ENCODE measurements at regions of chr17 and their contacts with region 1.

Region 1: DNA sequence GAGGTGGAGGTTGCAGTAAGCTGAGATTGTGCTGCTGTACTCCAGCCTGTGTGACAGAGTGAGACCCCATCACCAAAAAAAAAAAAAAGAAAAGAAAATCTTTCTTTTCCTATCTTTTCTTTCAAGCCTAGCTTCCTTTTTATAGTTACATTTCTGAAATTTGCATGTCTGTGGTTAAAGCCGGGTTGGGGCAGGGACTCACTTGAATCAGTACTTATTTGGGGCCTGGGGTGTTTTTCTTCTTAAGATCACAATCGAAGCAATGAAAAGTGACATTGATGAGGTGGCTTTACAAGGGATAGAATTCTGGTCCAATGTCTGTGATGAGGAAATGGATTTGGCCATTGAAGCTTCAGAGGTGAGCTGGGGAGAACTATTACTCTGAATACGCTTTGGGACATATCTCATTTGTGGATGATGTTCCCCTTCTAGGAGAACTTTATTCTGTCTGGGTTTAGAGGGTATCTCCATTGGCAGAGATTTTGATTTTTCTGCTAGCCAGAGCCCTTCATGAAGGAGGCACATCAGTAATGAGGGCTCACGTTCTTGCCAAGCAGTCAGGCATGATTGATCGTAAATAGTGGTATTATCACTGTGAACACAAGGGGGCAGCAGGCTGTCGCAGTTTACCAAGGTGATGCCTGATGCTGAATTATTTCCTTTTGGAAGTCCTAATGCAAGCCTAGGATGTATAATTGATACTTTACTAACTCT is 14.3 kb downstream of the KPNB1 start:
- DNase-seq: peak; percentile 71
- H3K4me3 Mint-ChIP-seq: no peak overlapping the region
- H3K27ac Mint-ChIP-seq: peak overlapping the region; percentile 80
- H3K4me1 Mint-ChIP-seq: peaks cover 31% of the 10 kb centered on the region
- H3K27me3 Mint-ChIP-seq: no peaks in the 10 kb centered on the region

Region 2: DNA sequence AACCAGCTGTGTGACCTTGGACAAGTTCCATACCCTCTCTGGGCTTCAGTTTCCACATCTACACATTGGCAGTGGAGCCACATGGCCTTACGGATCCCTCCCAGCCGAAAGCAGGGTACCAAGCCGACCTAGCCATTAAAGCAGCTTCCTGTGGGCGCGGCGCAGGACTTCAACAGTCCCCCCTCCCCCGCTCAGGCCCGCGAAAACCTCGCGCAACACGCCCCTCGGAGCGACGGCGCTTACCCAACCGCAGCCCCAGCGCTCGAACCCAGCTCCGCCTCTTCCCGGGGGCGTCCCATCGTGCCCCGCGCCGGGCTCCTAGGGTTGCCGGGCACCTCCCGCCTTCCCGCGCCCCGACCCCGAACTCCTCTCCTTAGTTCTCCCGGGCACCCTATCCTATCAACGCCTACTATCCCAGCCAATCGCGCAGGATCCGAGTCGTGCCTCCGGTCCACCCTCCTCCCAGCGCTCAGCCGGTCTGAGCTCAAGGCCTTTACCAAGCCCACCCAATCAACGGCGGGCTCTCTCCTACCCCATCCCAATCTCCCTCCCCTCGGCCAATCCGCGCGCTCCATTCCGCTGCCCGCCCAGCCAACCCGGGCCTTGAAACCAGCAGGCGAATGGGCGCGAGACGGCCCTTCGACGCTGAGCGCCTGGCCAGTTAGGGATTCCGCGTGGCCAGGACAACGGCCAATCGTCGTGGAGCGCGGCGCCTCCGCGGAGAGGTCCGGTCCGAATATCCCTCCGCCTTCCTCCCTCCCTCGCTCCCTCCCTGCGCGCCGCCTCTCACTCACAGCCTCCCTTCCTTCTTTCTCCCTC is 14.7 kb before region 1 on chr17 and contains the start of gene KPNB1:
- CTCF ChIA-PET with region 1: interaction called, 38 read pairs
- POLR2A ChIA-PET with region 1: interaction called, 31 read pairs
- intact Hi-C with region 1: loop called (anchors 1 kb)
- DNase-seq: peak; percentile 100
- H3K4me3 Mint-ChIP-seq: peak within 1 kb of the TSS; percentile 92
- H3K27ac Mint-ChIP-seq: peak within 1 kb of the TSS; percentile 98
- H3K4me1 Mint-ChIP-seq: peaks cover 44% of the 10 kb centered on the region
- H3K27me3 Mint-ChIP-seq: no peaks in the 10 kb centered on the region
- total RNA-seq, gene KPNB1: 475 to 488 TPM

Region 3: GRCh38 chr17:47675380-47676198 is 11.5 kb after region 1 on chr17:
- CTCF ChIA-PET with region 1: interaction called, 47 read pairs
- POLR2A ChIA-PET with region 1: interaction called, 7 read pairs
- intact Hi-C with region 1: no loop called
- DNase-seq: no peak
- H3K4me3 Mint-ChIP-seq: no peak overlapping the region
- H3K27ac Mint-ChIP-seq: peak overlapping the region; percentile 72
- H3K4me1 Mint-ChIP-seq: peaks cover 27% of the 10 kb centered on the region
- H3K27me3 Mint-ChIP-seq: no peaks in the 10 kb centered on the region

Region 4: GRCh38 chr17:47708863-47709541 is 44.9 kb after region 1 on chr17:
- CTCF ChIA-PET with region 1: no interaction called
- POLR2A ChIA-PET with region 1: no interaction called
- intact Hi-C with region 1: no loop called
- DNase-seq: no peak
- H3K4me3 Mint-ChIP-seq: no peak overlapping the region
- H3K27ac Mint-ChIP-seq: no peak overlapping the region
- H3K4me1 Mint-ChIP-seq: peaks cover 62% of the 10 kb centered on the region
- H3K27me3 Mint-ChIP-seq: no peaks in the 10 kb centered on the region

Region 5: DNA sequence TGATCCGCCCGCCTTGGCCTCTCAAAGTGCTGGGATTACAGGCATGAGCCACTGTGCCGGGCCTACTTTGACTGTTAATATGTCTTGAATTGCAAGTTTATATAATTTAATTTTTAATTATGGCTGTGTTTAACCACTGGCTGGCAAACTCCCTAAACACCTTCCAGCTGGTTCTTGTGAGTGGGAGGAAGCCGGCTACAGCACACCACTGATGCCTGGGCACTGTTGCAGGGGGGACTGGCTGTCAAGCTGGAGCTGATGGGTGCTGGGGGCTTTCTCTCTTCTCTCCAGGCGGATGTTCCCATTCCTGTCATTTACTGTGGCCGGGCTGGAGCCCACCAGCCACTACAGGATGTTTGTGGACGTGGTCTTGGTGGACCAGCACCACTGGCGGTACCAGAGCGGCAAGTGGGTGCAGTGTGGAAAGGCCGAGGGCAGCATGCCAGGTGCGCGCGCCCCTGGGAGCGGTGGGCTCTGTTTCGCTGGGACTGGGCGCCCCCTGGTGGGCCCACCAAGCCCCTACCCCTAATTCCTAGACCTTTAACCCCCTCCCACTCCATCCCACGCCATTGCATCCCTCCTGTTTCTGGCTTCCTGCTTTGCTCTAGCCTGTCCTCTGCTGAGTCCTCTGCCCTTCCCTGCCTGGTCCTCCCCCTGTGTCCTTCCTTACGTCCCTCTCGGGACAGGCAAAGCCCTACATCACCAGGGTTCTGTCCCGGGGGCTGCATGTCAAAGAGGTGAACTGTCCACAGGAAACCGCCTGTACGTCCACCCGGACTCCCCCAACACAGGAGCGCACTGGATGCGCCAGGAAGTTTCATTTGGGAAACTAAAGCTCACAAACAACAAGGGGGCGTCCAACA is 78.5 kb after region 1 on chr17:
- CTCF ChIA-PET with region 1: interaction called, 5 read pairs
- POLR2A ChIA-PET with region 1: no interaction called
- intact Hi-C with region 1: loop called (anchors 5 kb)
- DNase-seq: peak; percentile 48
- H3K4me3 Mint-ChIP-seq: no peak overlapping the region
- H3K27ac Mint-ChIP-seq: peak overlapping the region; percentile 75
- H3K4me1 Mint-ChIP-seq: peaks cover 42% of the 10 kb centered on the region
- H3K27me3 Mint-ChIP-seq: no peaks in the 10 kb centered on the region

Region 6: GRCh38 chr17:47789611-47790561 is 125.8 kb after region 1 on chr17:
- CTCF ChIA-PET with region 1: interaction called, 27 read pairs
- POLR2A ChIA-PET with region 1: no interaction called
- intact Hi-C with region 1: loop called (anchors 5 kb)
- DNase-seq: peak; percentile 78
- H3K4me3 Mint-ChIP-seq: peak overlapping the region; percentile 66
- H3K27ac Mint-ChIP-seq: no peak overlapping the region
- H3K4me1 Mint-ChIP-seq: peaks cover 11% of the 10 kb centered on the region
- H3K27me3 Mint-ChIP-seq: peaks cover 43% of the 10 kb centered on the region